WTC11 (cell line): ENCODE measurements at regions of chr3 and their contacts with region 1.

Region 1: DNA sequence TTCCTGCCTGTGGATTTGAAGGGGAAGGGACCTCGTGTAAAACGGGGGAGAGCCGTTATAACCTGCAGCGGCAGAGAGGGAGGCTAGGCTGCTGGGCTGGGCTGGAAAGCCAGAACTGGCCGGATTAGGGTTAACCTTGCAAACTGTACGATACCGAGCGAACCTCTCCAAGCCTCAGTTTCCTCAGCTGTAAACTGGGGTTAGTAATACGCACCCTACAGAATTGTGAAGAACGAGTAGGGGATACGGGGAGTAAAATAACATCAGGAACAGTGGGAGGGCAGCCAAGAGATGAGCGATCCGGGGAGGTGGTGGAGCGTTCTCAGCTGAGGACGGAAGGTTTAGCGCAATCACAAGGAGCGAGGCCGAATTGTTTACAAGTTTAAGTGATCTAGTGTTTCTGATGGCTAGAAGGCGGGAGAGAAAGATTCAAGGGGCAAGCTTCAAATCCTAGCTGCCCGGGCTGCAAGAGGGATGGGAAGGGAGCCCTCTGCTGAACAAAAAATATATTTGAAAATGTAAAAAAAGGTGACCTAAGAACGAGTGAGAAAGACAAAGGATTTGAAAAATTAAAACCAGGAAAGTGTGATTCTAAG is 768 bp upstream of the SEMA5B start:
- DNase-seq: peak; percentile 29
- ATAC-seq: peak; percentile 11
- H3K4me3 Mint-ChIP-seq: peak overlapping the region; percentile 89
- H3K27ac Mint-ChIP-seq: no peak overlapping the region
- H3K4me1 Mint-ChIP-seq: peaks cover 33% of the 10 kb centered on the region
- H3K27me3 Mint-ChIP-seq: peaks cover 49% of the 10 kb centered on the region
- CTCF ChIP-seq: no peak

Region 2: DNA sequence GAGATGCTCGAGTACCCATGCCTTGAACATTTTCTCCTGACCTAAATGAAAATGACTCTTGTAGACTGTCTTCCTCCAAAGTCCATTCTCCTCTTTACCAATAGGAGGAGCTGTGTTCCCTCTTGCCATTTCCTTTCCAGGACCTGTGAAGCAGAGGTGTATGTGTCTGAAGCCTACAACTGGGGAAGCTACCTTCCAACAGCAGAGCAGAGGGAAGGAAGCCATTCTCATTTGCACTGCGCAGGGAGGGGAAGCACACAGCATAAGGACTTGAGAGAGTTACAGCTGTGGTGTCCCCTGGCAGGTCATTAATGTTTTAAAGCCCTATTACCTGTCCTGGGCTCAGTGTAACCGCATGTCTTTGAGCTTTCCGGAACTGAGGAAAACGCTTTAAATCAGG is 273.4 kb before region 1 on chr3:
- CTCF ChIA-PET with region 1: interaction called, 10 read pairs
- POLR2A ChIA-PET with region 1: no interaction called
- DNase-seq: no peak
- ATAC-seq: peak; percentile 100
- H3K4me3 Mint-ChIP-seq: no peak overlapping the region
- H3K27ac Mint-ChIP-seq: no peak overlapping the region
- H3K4me1 Mint-ChIP-seq: 0 out of 2 replicates have a peak, but pooled peaks cover 2% of the 10 kb centered on the region
- H3K27me3 Mint-ChIP-seq: no peaks in the 10 kb centered on the region
- CTCF ChIP-seq: peak; percentile 67

Region 3: GRCh38 chr3:122952512-122952911 is 75.8 kb before region 1 on chr3:
- CTCF ChIA-PET with region 1: interaction called, 29 read pairs
- POLR2A ChIA-PET with region 1: no interaction called
- DNase-seq: peak; percentile 27
- ATAC-seq: peak; percentile 71
- H3K4me3 Mint-ChIP-seq: no peak overlapping the region
- H3K27ac Mint-ChIP-seq: no peak overlapping the region
- H3K4me1 Mint-ChIP-seq: peaks cover 36% of the 10 kb centered on the region
- H3K27me3 Mint-ChIP-seq: no peaks in the 10 kb centered on the region
- CTCF ChIP-seq: no peak

Region 4: GRCh38 chr3:122986693-122987179 is 41.6 kb before region 1 on chr3:
- CTCF ChIA-PET with region 1: interaction called, 10 read pairs
- POLR2A ChIA-PET with region 1: interaction called, 5 read pairs
- DNase-seq: peak; percentile 74
- ATAC-seq: peak; percentile 53
- H3K4me3 Mint-ChIP-seq: peak overlapping the region; percentile 51
- H3K27ac Mint-ChIP-seq: peak overlapping the region; percentile 97
- H3K4me1 Mint-ChIP-seq: peaks cover 71% of the 10 kb centered on the region
- H3K27me3 Mint-ChIP-seq: no peaks in the 10 kb centered on the region
- CTCF ChIP-seq: no peak

Region 5: DNA sequence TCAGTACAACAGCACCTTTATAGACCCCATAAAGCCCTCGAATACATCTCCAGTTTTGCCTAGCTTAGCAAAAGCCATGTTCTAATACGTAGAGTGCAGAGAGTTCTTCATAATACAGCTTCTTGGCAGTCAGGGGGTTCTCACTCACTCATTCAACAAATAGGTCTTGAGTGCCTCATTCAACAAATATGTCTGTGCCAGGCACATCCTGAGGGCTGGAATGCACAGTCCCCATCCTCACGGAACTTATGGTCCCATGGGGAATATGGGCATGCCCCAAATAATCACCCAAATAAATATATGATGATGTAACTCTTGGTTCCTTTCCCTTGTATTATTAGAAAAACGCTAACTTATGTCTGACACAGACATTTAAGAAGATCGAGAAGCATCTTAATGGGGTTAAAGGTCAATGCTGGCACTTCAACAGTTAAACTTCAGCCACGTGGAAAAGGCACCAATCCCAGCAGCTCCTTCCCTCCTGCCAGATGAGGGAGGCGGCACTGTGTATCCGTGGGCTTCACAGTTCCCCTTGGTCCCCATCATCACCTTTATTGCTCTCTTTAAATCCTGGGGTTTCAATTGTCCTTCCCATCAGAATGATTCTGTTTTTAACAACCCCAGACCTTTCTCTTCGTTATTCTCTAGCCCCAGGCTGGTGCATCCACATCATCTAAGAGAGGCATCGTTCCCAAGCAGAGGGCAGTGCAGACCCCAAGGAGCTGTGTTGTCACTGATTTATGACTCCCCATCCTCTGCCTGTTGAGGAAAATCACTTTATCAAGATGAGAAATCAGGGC is 18.1 kb after region 1 on chr3:
- CTCF ChIA-PET with region 1: interaction called, 15 read pairs
- POLR2A ChIA-PET with region 1: no interaction called
- DNase-seq: no peak
- ATAC-seq: no peak
- H3K4me3 Mint-ChIP-seq: no peak overlapping the region
- H3K27ac Mint-ChIP-seq: no peak overlapping the region
- H3K4me1 Mint-ChIP-seq: peaks cover 20% of the 10 kb centered on the region
- H3K27me3 Mint-ChIP-seq: no peaks in the 10 kb centered on the region
- CTCF ChIP-seq: no peak

Region 6: GRCh38 chr3:123129092-123129491 is 100.8 kb after region 1 on chr3:
- CTCF ChIA-PET with region 1: no interaction called
- POLR2A ChIA-PET with region 1: no interaction called
- DNase-seq: no peak
- ATAC-seq: no peak
- H3K4me3 Mint-ChIP-seq: no peak overlapping the region
- H3K27ac Mint-ChIP-seq: no peak overlapping the region
- H3K4me1 Mint-ChIP-seq: peaks cover 6% of the 10 kb centered on the region; the same call in 1 of the 2 replicates
- H3K27me3 Mint-ChIP-seq: no peaks in the 10 kb centered on the region
- CTCF ChIP-seq: no peak

Region 7: GRCh38 chr3:123297627-123297899 is 269.2 kb after region 1 on chr3:
- CTCF ChIA-PET with region 1: no interaction called
- POLR2A ChIA-PET with region 1: no interaction called
- DNase-seq: peak; percentile 36
- ATAC-seq: peak; percentile 66
- H3K4me3 Mint-ChIP-seq: no peak overlapping the region
- H3K27ac Mint-ChIP-seq: no peak overlapping the region
- H3K4me1 Mint-ChIP-seq: no peaks in the 10 kb centered on the region
- H3K27me3 Mint-ChIP-seq: no peaks in the 10 kb centered on the region
- CTCF ChIP-seq: no peak